ENCODE measurements at regions of chr1 and their contacts with region 1.

Region 1: GRCh38 chr1:182889997-182890396 is 50.9 kb downstream of the DHX9 start:
- DNase-seq: no peak
- ATAC-seq: no peak

Region 2: GRCh38 chr1:182430263-182431068 is 459.5 kb before region 1 on chr1:
- intact Hi-C with region 1: no loop called
- DNase-seq: no peak
- ATAC-seq: no peak

Region 3: GRCh38 chr1:183139281-183139942 is 249.4 kb after region 1 on chr1:
- intact Hi-C with region 1: loop called (anchors 10 kb)
- DNase-seq: no peak
- ATAC-seq: no peak